ENCODE measurements at regions of chr20 and their contacts with region 1.

Region 1: GRCh38 chr20:49230561-49231193 is 11.5 kb downstream of the DDX27 start:
- DNase-seq: peak; percentile 85 to 92
- H3K4me3 ChIP-seq: no peak overlapping the region
- H3K4me3 Mint-ChIP-seq: no peak overlapping the region
- H3K27ac Mint-ChIP-seq: peak overlapping the region; percentile 22
- H3K4me1 ChIP-seq: peaks cover 22% of the 10 kb centered on the region
- H3K4me1 Mint-ChIP-seq: peaks cover 19% of the 10 kb centered on the region
- H3K27me3 ChIP-seq: no peaks in the 10 kb centered on the region
- H3K27me3 Mint-ChIP-seq: no peaks in the 10 kb centered on the region
- CTCF ChIP-seq: no peak

Region 2: GRCh38 chr20:49245921-49246740 is 15.5 kb after region 1 on chr20:
- CTCF ChIA-PET with region 1: interaction called, 14 read pairs
- POLR2A ChIA-PET with region 1: no interaction called
- intact Hi-C with region 1: no loop called
- DNase-seq: peak in 1 of 2 experiments; percentile 74
- H3K4me3 ChIP-seq: no peak overlapping the region
- H3K4me3 Mint-ChIP-seq: no peak overlapping the region
- H3K27ac Mint-ChIP-seq: no peak overlapping the region
- H3K4me1 ChIP-seq: no peaks in the 10 kb centered on the region
- H3K4me1 Mint-ChIP-seq: no peaks in the 10 kb centered on the region
- H3K27me3 ChIP-seq: no peaks in the 10 kb centered on the region
- H3K27me3 Mint-ChIP-seq: no peaks in the 10 kb centered on the region
- CTCF ChIP-seq: peak; percentile 97

Measured in Caco-2 (cell line).